ENCODE measurements at regions of chr21 and their contacts with region 1.

Region 1: DNA sequence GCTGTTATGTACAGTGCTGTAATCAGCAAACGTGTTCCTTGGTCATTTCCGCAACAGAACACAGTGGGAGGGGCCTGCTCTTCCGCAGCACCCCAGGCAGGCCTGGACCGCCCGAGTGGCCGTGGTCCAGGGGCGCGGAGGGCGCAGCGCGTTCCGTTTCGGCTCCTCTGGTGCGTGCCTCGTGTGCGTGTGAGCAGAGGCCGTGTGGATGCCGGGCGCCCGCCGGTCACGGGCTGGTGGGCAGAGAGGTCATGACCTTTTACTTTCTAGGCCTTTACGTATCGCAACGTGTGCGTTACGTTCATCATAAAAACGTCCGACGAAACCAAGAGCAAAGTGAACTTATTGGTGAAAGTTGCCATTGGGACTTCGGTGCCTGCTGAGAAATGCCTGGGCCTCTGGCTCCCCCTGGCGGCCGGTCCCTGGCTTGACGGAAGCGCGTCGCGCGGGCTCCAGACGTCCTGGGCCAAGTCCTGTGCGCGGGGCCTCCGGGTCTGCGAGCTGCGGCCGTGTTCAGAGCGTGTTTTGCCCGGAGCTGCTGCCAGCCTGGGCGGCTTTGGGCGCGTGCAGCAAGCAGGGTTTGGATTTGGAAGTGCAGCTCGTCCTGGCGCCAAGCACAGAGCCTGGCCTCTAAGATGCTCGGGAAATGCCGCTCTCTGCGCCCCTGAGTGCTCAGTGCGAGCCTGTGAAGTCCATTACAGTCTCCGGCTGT is 34.4 kb downstream of the COL18A1 start:
- DNase-seq: no peak
- H3K4me3 ChIP-seq: peak overlapping the region; percentile 15 to 64 (median 35)
- H3K27ac ChIP-seq: peak overlapping the region; percentile 51 to 89 (median 80)
- H3K4me1 ChIP-seq: peaks cover 11 to 51% (median 17%) of the 10 kb centered on the region in 3 donors
- H3K27me3 ChIP-seq: peaks cover 0 to 3% (median 0%) of the 10 kb centered on the region in 4 donors
- CTCF ChIP-seq: peak; percentile 96 to 99 (median 98)
- POLR2A ChIP-seq: peak in 1 of 4 donors; percentile 9

Region 2: GRCh38 chr21:44949779-44950198 is 489.5 kb before region 1 on chr21:
- intact Hi-C with region 1: loop called (anchors 10 kb)
- DNase-seq: no peak
- H3K4me3 ChIP-seq: no peak overlapping the region
- H3K27ac ChIP-seq: no peak overlapping the region
- H3K4me1 ChIP-seq: peaks cover 2 to 23% (median 6%) of the 10 kb centered on the region in 3 donors
- H3K27me3 ChIP-seq: no peaks in the 10 kb centered on the region
- CTCF ChIP-seq: peak; percentile 87 to 97 (median 91)
- POLR2A ChIP-seq: no peak

Region 3: DNA sequence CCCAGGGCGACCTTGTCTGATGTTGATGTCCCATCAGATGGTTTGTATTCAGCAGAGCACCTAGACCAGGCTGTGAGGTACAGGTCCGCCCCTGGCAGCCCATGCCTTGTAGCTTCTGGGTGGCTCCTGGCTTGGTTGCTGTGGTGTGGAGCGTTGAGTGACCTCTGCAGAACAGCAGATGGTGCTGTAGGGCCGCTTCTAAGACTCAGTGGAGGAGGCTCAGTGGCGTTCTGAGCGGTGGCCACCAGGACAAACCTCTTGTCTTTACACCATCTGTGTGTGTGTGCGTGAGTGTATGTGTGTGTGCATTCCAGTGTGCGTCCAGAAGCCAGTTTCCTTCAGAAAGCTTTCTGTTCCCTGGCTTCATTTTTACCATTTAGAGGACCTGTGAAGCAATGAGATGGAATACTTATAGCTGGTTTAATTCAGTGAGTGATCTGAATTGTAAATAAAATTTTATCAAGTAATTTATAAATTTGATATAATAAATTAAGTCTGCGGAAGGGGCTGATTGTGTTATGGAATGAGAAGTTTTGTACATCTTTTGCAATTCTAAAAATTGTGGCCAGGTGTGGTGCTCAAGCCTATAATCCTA is 298.9 kb before region 1 on chr21:
- intact Hi-C with region 1: loop called (anchors 5 kb)
- DNase-seq: no peak
- H3K4me3 ChIP-seq: no peak overlapping the region
- H3K27ac ChIP-seq: no peak overlapping the region
- H3K4me1 ChIP-seq: peaks cover 0 to 17% (median 0%) of the 10 kb centered on the region in 3 donors
- H3K27me3 ChIP-seq: no peaks in the 10 kb centered on the region
- CTCF ChIP-seq: peak; percentile 55 to 94 (median 80)
- POLR2A ChIP-seq: no peak

Region 4: DNA sequence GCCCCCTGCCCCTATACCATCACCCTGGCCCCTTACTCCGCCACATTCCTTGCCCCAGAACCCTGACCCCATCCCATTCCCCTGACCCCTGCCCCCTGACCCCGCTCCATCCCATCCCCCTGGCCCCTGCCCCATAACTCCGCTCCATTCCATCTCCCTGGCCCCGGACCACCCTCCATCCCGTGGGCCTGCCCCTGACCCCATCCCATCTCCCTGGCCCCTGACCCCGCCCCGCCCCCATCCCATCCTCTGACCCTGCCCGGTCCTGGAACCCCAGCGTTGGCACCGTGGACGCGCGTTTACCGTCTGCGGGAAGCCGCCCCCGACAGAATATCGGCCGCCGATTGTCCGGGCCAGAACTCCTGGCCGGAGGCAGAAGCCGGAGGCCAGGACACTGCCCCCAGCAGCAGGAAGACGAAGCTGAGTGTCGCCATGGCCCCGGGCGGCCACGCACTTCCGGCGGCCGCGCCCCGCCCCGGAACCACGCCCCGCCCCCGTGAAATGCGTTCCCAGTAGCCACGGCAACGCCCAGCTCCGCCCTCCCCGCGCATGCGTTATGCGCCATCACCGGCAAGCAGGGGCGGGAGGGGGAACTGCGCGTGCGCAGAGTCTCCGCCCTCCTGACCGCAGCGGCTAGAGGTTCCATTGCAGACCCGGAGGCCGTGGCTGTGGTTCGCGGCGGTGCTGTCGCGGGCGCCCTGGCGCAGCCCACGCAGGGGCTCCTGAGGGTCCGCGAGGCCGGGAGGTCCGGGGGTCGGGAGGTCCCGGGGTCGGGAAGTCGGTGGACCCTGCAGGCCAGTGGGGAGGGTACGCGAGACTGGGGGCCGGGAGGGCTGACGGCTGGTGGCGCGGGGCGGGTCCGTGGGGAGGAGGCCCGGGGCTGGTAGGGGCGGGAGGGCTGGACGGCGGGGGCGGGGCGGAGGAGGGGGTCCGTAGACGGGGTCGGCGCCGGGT is 151.6 kb before region 1 on chr21 and contains the start of gene POFUT2:
- intact Hi-C with region 1: loop called (anchors 2 kb)
- DNase-seq: peak; percentile 65
- H3K4me3 ChIP-seq: peak within 1 kb of the TSS; percentile 55 to 95 (median 82)
- H3K27ac ChIP-seq: peak within 1 kb of the TSS; percentile 80 to 93 (median 88)
- H3K4me1 ChIP-seq: peaks cover 15 to 48% (median 27%) of the 10 kb centered on the region in 3 donors
- H3K27me3 ChIP-seq: no peaks in the 10 kb centered on the region
- CTCF ChIP-seq: peak in 2 of 6 experiments; percentile 20 to 21
- POLR2A ChIP-seq: peak in 3 of 4 donors; percentile 59 to 84 (median 83)
- total RNA-seq, gene POFUT2: 7.9 to 11.4 (median 9.4) TPM

Region 5: GRCh38 chr21:45378258-45378966 is 60.9 kb before region 1 on chr21:
- intact Hi-C with region 1: loop called (anchors 10 kb)
- DNase-seq: no peak
- H3K4me3 ChIP-seq: no peak overlapping the region
- H3K27ac ChIP-seq: peak overlapping the region in 3 of 4 donors; percentile 1 to 47 (median 32)
- H3K4me1 ChIP-seq: peaks cover 0 to under 1% (median 0%) of the 10 kb centered on the region in 3 donors
- H3K27me3 ChIP-seq: peaks cover 0 to 12% (median 0%) of the 10 kb centered on the region in 4 donors
- CTCF ChIP-seq: no peak
- POLR2A ChIP-seq: no peak

Measured in esophagus squamous epithelium (tissue), 5 donors.